ENCODE measurements at regions of chr4 and their contacts with region 1.

Region 1: DNA sequence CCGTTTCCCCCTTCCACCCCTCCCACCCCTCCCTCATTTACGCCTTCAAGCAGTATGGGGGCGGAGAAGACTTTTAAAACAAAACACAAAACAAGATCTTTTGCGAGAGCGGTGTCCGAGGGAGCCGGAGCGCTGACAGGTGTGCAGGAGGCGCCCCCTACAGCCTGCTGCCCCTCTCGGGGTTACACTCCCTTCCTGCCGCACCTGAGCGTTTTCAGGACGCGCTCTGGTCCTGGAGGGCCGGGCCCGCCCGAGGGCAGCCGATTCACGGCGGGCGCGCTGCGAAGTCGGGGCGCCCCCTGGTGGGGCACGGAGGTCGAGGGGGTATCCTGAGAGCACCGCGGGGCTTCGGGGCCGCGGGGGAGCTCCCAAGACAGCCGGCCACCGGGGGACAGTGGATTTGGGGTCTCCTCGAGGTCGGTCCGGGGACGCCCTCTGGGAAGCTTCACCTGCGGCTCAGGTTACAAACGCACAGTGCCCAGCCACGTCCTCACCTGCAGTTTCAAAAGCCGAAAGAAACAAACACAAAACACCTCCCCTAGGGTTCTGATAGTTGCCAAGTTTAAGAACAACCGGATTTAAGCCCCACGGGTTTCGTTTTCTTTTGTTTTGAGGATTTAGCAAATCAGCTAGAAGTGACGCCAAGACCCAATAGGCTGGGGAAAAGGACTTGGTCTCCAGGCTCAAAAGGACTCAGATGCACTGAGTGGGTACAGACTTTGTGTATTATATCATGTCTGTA is 8.0 kb upstream of the NEUROG2 start:
- DNase-seq: peak; percentile 96
- ATAC-seq: peak; percentile 87
- H3K4me3 Mint-ChIP-seq: peak overlapping the region; percentile 85
- H3K27ac Mint-ChIP-seq: no peak overlapping the region
- H3K4me1 Mint-ChIP-seq: peaks cover 43% of the 10 kb centered on the region
- H3K27me3 Mint-ChIP-seq: peaks cover 69% of the 10 kb centered on the region
- CTCF ChIP-seq: peak; percentile 85

Region 2: DNA sequence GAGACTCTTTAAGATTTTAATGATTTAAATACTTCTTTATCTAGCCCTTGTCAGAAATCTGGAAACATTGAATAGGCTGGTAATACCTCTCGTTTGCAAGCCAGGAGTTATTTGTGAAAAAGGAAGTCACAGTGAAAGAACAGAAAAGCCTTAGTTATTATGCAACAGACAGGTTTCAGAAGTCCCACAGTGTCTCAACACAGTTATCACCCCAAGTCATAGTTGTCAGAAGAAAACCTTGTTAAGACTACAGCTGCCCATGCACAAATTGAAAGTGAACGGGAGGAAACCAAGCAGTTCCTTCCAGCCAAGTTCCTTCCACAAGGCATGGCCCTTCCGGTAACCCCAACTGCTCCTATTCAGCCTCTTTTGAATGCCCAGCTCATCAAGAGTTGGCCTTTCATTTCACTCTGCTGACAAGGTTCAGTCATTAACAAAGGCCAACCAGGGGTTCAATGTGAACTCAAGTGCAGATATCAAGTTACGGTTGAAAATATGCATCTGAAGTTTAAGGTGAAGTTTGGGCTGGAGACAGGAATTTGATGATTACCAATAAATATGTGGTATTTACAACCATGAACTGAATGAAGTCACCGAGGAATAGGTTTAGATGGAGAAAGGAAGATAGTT is 211.2 kb before region 1 on chr4:
- CTCF ChIA-PET with region 1: interaction called, 11 read pairs
- POLR2A ChIA-PET with region 1: no interaction called
- DNase-seq: no peak
- ATAC-seq: peak; percentile 30; the same call in 1 of the 2 replicates
- H3K4me3 Mint-ChIP-seq: no peak overlapping the region
- H3K27ac Mint-ChIP-seq: no peak overlapping the region
- H3K4me1 Mint-ChIP-seq: peaks cover 23% of the 10 kb centered on the region
- H3K27me3 Mint-ChIP-seq: peaks cover 5% of the 10 kb centered on the region; the same call in 1 of the 2 replicates
- CTCF ChIP-seq: no peak

Region 3: DNA sequence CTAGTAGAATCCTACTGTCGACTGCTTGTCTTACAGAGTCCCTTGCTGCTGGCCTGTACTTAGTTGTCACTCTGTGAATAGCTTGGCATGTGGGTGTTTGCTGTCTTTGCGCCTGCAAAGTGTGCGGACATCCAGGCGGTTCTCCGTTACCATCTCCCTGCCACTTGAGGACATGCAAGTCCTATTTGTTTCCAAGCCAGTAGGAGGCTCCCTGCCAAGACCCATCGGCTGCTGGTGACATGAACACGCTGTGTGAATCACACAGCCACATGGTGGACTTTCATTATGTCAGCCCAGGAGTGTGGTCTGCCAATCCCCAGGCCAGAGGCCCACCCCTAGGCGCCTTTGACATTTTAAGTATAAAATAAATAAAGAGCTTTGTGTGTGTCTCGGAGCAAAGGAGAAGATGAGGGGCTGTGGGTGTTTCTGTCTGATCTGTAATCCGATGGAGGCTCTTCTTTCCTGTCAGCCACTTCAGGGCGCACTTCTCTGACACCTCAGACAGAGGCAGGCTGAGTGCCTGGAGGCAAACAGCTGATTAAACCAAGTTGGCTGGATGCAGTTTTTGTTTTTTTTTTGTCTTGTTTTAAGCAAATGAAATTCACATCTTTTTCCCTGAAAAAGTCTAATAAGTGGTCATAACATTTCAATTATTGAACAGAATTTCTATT is 175.3 kb before region 1 on chr4:
- CTCF ChIA-PET with region 1: interaction called, 10 read pairs
- POLR2A ChIA-PET with region 1: interaction called, 5 read pairs
- DNase-seq: peak; percentile 61
- ATAC-seq: peak; percentile 96
- H3K4me3 Mint-ChIP-seq: no peak overlapping the region
- H3K27ac Mint-ChIP-seq: no peak overlapping the region
- H3K4me1 Mint-ChIP-seq: peaks cover 20% of the 10 kb centered on the region
- H3K27me3 Mint-ChIP-seq: no peaks in the 10 kb centered on the region
- CTCF ChIP-seq: no peak

Region 4: DNA sequence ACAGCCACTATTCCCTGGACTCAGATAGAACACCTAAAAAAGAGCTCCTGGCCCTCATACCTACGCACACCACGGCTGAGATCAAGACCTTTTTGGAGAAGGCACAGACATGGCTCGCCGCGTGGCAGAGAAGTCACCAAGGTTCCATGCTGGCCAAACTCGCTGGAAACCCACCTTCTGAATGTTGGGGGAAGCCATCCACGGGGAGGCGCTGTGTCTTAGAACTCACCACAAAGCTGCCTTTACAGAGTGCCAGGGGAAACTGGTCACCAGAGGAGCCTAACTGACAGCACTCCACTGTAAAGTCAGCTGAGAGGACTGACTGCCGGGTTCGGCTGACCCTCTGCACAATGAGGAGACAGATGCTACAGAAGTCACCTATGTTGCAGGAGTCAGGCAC is 105.8 kb before region 1 on chr4:
- CTCF ChIA-PET with region 1: interaction called, 10 read pairs
- POLR2A ChIA-PET with region 1: no interaction called
- DNase-seq: peak; percentile 80
- ATAC-seq: peak; percentile 94
- H3K4me3 Mint-ChIP-seq: no peak overlapping the region
- H3K27ac Mint-ChIP-seq: no peak overlapping the region
- H3K4me1 Mint-ChIP-seq: peaks cover 3% of the 10 kb centered on the region
- H3K27me3 Mint-ChIP-seq: peaks cover 8% of the 10 kb centered on the region; the same call in 1 of the 2 replicates
- CTCF ChIP-seq: no peak; the same call in 1 of the 2 replicates

Region 5: DNA sequence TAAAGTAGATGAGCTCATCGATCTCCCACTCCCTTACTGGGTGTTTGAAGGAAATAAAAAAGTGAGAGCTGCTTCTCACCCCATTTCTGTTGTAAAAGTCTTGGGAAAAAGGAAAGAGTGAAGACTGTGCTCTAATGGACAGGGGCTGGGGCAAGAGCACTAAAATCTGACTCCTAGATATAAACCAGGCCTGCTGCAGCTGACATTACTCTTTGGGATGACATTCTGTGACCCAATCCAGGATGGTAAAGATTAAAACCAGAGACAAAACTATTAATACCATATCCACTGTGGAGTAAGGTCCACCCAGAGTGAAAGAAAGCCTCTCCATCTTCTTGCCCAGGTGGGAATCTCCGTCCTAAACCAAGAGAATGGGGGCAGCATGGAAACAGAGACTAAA is 12.2 kb after region 1 on chr4:
- CTCF ChIA-PET with region 1: interaction called, 18 read pairs
- POLR2A ChIA-PET with region 1: no interaction called
- DNase-seq: no peak
- ATAC-seq: no peak
- H3K4me3 Mint-ChIP-seq: no peak overlapping the region
- H3K27ac Mint-ChIP-seq: no peak overlapping the region
- H3K4me1 Mint-ChIP-seq: no peaks in the 10 kb centered on the region
- H3K27me3 Mint-ChIP-seq: no peaks in the 10 kb centered on the region
- CTCF ChIP-seq: no peak

Region 6: DNA sequence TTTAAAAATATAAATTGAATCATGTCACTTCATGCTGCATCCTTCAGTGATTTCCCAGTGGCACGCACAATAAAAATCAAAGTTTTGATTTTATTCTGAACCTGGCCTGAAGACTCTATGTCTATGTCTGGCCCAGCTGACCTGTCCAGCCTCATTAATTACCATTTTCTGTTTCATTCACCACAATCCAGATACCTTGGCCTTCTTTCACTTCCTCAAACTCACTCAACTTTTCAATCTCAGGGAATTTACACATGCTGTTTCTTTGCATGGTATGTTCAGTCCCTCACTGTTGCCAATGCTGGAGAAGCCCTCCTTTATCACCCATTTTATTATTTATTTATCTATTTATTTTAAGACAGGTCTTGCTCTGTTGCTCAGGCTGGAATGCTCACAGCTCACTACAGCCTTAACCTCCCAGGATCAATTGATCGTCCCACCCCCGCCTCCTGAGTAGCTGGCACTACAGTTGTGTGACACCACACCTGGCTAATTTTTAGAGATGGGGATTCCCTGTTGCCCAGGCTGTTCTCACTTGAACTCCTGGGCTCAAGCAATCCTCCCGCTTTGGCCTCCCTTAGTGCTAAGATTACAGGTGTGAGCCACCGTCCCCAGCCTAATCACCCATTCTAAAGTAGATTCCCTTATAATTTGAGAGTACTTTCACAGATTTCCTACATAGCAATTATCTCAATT is 69.7 kb after region 1 on chr4:
- CTCF ChIA-PET with region 1: no interaction called
- POLR2A ChIA-PET with region 1: no interaction called
- DNase-seq: no peak
- ATAC-seq: no peak
- H3K4me3 Mint-ChIP-seq: no peak overlapping the region
- H3K27ac Mint-ChIP-seq: no peak overlapping the region
- H3K4me1 Mint-ChIP-seq: peaks cover 4% of the 10 kb centered on the region
- H3K27me3 Mint-ChIP-seq: no peaks in the 10 kb centered on the region
- CTCF ChIP-seq: no peak